ENCODE measurements at regions of chr2 and their contacts with region 1.

Region 1: DNA sequence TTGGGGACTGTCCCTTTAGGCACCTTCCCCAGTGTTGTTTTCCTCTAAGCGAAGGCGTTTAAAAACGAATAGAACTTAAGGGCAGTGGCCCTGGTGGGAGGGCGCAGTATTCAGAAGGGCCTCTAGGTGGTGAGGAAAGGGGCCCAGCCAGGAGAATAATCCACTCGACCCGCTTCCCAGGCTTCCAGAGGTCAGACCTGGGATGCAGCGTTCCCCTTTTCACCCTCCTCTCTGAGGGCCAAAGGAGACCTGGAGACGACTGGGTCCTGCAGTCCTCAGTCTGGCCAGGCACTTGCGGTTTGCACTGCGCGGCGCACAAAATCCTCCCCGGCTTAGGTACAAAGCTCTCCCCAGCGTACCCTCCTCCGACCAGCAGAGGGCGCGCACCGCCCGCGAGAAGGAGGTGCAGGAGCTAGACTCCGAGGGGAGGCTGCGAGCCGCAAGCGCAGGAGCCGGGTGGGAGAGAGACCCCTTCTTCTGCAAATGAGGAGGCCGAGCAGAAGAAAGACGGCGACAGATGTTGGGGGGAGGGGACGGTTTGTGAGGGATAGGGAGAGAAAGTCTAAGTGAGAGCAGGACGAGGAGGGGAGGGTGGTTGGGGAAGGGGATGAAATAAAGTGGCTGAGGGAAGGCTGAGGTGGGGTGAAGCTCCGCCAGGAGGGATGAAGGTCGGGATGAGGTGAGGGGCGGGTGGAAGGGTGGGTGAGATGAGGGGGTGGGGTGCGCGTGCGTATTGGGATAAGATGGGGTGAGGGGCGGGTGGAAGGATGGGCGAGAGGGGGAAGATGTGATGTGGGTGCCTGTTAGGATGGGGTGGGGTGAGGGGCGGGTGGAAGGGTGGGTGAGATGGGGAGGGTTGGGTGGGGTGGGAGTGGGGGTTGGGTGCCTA is 4.9 kb downstream of the FEV start:
- DNase-seq: peak; percentile 93
- ATAC-seq: peak; percentile 90
- H3K4me3 Mint-ChIP-seq: peak overlapping the region; percentile 58
- H3K27ac Mint-ChIP-seq: no peak overlapping the region
- H3K4me1 Mint-ChIP-seq: peaks cover 21% of the 10 kb centered on the region
- H3K27me3 Mint-ChIP-seq: peaks cover 63% of the 10 kb centered on the region
- CTCF ChIP-seq: peak; percentile 98

Region 2: DNA sequence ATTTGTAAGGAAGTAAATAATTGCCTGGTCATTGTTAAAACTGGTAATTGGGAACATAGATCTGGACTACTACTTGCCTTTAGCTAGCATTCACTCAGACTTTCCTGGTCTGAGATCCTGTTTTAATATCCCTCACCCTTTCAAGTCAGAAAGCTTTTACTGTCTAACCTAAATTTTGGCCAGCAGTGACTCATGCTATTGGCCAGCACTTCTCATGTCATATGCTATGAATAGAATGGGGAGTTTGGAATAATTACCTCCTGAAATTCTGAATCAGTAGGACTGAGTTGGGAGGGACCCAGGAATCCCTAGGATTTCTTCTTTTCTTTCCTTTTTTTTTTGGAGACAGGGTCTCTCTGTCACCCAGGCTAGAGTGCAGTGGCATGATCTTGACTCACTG is 288.9 kb before region 1 on chr2:
- CTCF ChIA-PET with region 1: no interaction called
- POLR2A ChIA-PET with region 1: no interaction called
- intact Hi-C with region 1: no loop called
- DNase-seq: no peak
- ATAC-seq: no peak
- H3K4me3 Mint-ChIP-seq: no peak overlapping the region
- H3K27ac Mint-ChIP-seq: no peak overlapping the region
- H3K4me1 Mint-ChIP-seq: peaks cover 2% of the 10 kb centered on the region
- H3K27me3 Mint-ChIP-seq: no peaks in the 10 kb centered on the region
- CTCF ChIP-seq: no peak

Region 3: GRCh38 chr2:218733171-218734021 is 246.7 kb before region 1 on chr2:
- CTCF ChIA-PET with region 1: no interaction called
- POLR2A ChIA-PET with region 1: no interaction called
- intact Hi-C with region 1: no loop called
- DNase-seq: peak; percentile 52
- ATAC-seq: peak; percentile 99
- H3K4me3 Mint-ChIP-seq: no peak overlapping the region
- H3K27ac Mint-ChIP-seq: peak overlapping the region; percentile 23
- H3K4me1 Mint-ChIP-seq: peaks cover 21% of the 10 kb centered on the region
- H3K27me3 Mint-ChIP-seq: no peaks in the 10 kb centered on the region
- CTCF ChIP-seq: no peak

Region 4: DNA sequence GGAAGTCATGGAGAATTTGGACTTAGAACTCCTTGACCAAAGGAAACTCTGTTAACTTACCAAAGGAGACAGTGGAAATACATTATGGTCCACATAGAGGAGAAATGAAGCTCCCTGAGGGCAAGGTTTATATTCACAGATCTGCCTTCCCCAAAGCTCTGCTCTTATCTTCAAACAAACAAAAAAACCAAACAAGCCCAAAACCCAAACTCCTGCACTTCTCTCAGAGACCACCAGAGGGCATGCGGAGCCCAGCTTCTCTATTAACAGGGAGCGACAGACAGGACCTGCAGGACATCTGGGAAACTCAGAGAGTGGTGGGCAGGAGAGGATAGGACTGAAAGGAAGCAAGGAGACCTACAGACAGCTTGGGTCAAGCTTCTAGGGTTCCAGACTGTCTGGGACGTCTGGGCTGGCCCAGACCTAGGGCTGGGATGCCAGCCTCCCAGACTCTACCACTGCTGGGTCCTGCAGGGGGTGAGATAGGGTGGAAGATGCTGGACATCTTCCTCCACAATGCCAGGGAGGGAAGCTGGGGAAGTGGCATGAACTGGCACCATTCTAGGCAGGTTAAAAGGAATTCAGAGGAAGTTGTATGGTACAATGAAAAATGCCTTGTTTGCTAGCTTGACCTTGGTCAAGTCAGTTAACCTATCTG is 103.4 kb before region 1 on chr2:
- CTCF ChIA-PET with region 1: interaction called, 60 read pairs
- POLR2A ChIA-PET with region 1: no interaction called
- intact Hi-C with region 1: no loop called
- DNase-seq: peak; percentile 84
- ATAC-seq: no peak
- H3K4me3 Mint-ChIP-seq: no peak overlapping the region
- H3K27ac Mint-ChIP-seq: no peak overlapping the region
- H3K4me1 Mint-ChIP-seq: peaks cover 51% of the 10 kb centered on the region
- H3K27me3 Mint-ChIP-seq: peaks cover 42% of the 10 kb centered on the region
- CTCF ChIP-seq: peak; percentile 98

Region 5: DNA sequence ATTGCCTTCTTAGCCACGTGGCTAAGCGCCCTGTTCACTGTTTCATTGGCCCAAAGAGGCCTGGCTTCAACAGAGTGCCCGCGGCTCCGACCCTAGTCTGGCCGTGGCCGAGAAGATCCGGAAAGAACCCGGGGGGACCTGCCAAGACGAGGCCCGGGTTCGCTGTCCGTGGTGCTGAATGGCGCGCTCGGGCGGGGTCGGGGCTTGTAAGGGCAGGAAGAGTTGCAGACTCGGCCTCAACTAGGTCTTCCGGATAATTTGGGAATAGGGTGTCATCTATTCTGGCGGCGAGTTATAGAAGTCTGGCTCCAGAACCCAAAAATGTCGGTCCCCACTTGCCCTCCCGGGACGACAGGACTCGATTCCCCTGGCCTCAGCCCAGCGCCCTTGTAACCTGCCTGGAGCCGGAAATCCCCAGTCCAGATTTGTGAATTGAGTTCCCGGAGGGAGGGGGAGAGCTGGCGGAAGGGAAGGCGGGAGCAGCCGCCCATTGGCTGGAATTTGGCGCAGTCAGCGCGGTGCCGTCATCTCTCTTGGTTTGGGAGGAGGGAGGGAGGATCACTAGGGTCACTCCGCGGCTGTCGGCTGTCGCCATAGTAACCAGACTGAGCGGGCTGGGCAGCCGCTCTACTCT is 17.1 kb before region 1 on chr2:
- CTCF ChIA-PET with region 1: interaction called, 32 read pairs
- POLR2A ChIA-PET with region 1: no interaction called
- intact Hi-C with region 1: no loop called
- DNase-seq: peak; percentile 73
- ATAC-seq: no peak
- H3K4me3 Mint-ChIP-seq: no peak overlapping the region
- H3K27ac Mint-ChIP-seq: no peak overlapping the region
- H3K4me1 Mint-ChIP-seq: peaks cover 17% of the 10 kb centered on the region
- H3K27me3 Mint-ChIP-seq: peaks cover 71% of the 10 kb centered on the region
- CTCF ChIP-seq: no peak

Region 6: GRCh38 chr2:219010162-219010756 is 30.2 kb after region 1 on chr2:
- CTCF ChIA-PET with region 1: interaction called, 20 read pairs
- POLR2A ChIA-PET with region 1: no interaction called
- intact Hi-C with region 1: no loop called
- DNase-seq: peak; percentile 58
- ATAC-seq: peak; percentile 80
- H3K4me3 Mint-ChIP-seq: no peak overlapping the region
- H3K27ac Mint-ChIP-seq: no peak overlapping the region
- H3K4me1 Mint-ChIP-seq: no peaks in the 10 kb centered on the region
- H3K27me3 Mint-ChIP-seq: peaks cover 18% of the 10 kb centered on the region
- CTCF ChIP-seq: peak; percentile 46

Region 7: DNA sequence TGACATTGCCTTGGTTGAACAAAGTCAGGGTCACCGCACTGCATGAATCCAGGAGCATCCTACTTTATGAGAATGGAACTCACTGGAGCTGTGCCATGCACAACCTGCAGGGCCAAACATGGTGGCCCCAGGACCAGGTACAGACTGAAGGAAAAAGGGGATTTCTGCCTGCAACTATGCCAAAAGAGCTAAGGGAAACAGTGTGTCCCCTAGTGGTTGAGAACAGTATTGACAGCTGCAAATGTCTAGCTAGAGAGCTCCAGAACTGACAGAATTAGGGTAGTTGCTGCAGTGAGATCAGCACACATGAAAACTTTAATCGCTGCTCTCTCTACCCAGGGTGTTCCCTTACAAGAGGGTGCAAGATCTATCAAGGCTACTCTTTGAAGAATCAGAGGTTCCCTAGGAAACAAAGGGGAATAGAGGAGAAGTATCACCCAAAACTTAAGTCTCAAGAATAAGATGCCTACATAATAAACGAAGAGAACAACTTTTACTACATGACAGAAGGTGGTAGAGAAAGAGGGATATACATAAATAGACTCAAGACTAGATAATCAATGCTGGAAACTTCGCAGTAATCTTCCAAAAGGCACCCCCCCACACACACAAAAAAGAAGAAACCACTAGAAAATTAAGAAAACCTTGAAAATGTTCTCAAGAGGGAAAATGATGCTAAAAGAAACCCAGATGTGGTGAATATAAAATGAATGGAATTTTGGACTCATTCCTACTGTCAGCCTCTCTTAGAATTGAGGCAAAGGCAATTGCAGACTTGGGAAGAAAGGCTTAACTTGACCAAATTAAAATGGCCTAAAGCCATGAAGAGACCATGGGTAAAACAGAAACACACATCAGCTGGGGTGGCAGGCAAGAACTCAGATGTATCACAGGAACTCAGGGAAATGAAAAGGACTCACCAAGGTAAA is 124.3 kb after region 1 on chr2:
- CTCF ChIA-PET with region 1: interaction called, 10 read pairs
- POLR2A ChIA-PET with region 1: no interaction called
- intact Hi-C with region 1: no loop called
- DNase-seq: peak; percentile 30
- ATAC-seq: peak; percentile 90
- H3K4me3 Mint-ChIP-seq: no peak overlapping the region
- H3K27ac Mint-ChIP-seq: peak overlapping the region; percentile 28
- H3K4me1 Mint-ChIP-seq: peaks cover 32% of the 10 kb centered on the region
- H3K27me3 Mint-ChIP-seq: no peaks in the 10 kb centered on the region
- CTCF ChIP-seq: peak; percentile 82

Region 8: DNA sequence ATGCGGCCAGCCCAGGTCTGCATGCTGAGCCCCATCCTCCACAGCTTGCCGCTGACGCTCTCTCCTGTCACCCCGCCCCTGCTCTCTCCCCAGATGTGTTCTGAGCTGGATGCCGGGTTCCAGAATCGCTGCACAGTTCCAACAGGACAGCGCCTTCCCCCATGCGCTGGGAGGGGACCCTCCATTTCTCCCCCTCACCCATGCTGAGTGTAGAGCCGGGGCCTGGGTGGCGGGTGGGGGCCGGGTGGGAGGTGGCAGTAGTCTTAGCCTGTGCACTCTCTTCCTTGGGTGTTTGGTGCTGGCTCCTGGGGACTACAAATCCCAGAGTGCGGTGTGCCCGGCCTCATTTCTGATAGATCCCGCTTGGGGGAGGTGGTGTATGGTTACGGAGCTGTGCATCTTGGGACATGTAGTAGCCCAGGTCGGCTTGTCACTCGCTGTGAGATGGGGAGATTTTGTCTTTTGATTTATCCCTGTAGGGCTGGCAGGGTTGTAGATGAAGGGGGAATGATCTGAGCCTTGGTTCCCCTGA is 305.9 kb after region 1 on chr2:
- CTCF ChIA-PET with region 1: no interaction called
- POLR2A ChIA-PET with region 1: no interaction called
- intact Hi-C with region 1: no loop called
- DNase-seq: no peak
- ATAC-seq: no peak
- H3K4me3 Mint-ChIP-seq: no peak overlapping the region
- H3K27ac Mint-ChIP-seq: peak overlapping the region; percentile 52
- H3K4me1 Mint-ChIP-seq: peaks cover 28% of the 10 kb centered on the region
- H3K27me3 Mint-ChIP-seq: no peaks in the 10 kb centered on the region
- CTCF ChIP-seq: no peak

Measured in activated CD8-positive, alpha-beta T cell treated with anti-CD3 and anti-CD28 coated beads for 36 hours (primary cell).